CD4-positive, alpha-beta T cell (primary cell): ENCODE measurements at regions of chr12 and their contacts with region 1.

Region 1: GRCh38 chr12:14960548-14961465 is 594 bp downstream of the ARHGDIB start:
- DNase-seq: peak in 12 of 14 experiments; percentile 45 to 79 (median 55)
- ATAC-seq: peak; percentile 40
- H3K4me3 ChIP-seq: peak overlapping the region; percentile 80
- H3K4me3 Mint-ChIP-seq: peak overlapping the region; percentile 97
- H3K27ac ChIP-seq: peak overlapping the region; percentile 89 to 90
- H3K27ac Mint-ChIP-seq: peak overlapping the region; percentile 94
- H3K4me1 ChIP-seq: peaks cover 41% of the 10 kb centered on the region
- H3K4me1 Mint-ChIP-seq: peaks cover 73% of the 10 kb centered on the region
- H3K27me3 ChIP-seq: no peaks in the 10 kb centered on the region
- H3K27me3 Mint-ChIP-seq: no peaks in the 10 kb centered on the region
- CTCF ChIP-seq: no peak

Region 2: GRCh38 chr12:14774906-14775762 is 185.7 kb before region 1 on chr12:
- CTCF ChIA-PET with region 1: interaction called, 4 read pairs
- POLR2A ChIA-PET with region 1: interaction called, 144 read pairs
- intact Hi-C with region 1: loop called (anchors 2 to 5 kb)
- DNase-seq: peak in 11 of 14 experiments; percentile 2 to 56 (median 14)
- ATAC-seq: no peak
- H3K4me3 ChIP-seq: peak overlapping the region; percentile 83
- H3K4me3 Mint-ChIP-seq: peak overlapping the region; percentile 97
- H3K27ac ChIP-seq: peak overlapping the region; percentile 61 to 79
- H3K27ac Mint-ChIP-seq: peak overlapping the region; percentile 100
- H3K4me1 ChIP-seq: peaks cover 28% of the 10 kb centered on the region
- H3K4me1 Mint-ChIP-seq: peaks cover 63% of the 10 kb centered on the region
- H3K27me3 ChIP-seq: no peaks in the 10 kb centered on the region
- H3K27me3 Mint-ChIP-seq: no peaks in the 10 kb centered on the region
- CTCF ChIP-seq: no peak

Region 3: GRCh38 chr12:14937689-14938088 is 23.1 kb before region 1 on chr12:
- CTCF ChIA-PET with region 1: interaction called, 3 read pairs
- POLR2A ChIA-PET with region 1: interaction called, 71 read pairs
- intact Hi-C with region 1: loop called in 1 of 2 experiments (anchors 2 kb)
- DNase-seq: peak in 5 of 14 experiments; percentile 33 to 68 (median 55)
- ATAC-seq: peak; percentile 35
- H3K4me3 ChIP-seq: no peak overlapping the region
- H3K4me3 Mint-ChIP-seq: no peak overlapping the region
- H3K27ac ChIP-seq: no peak overlapping the region
- H3K27ac Mint-ChIP-seq: peak overlapping the region; percentile 72
- H3K4me1 ChIP-seq: peaks cover 17% of the 10 kb centered on the region
- H3K4me1 Mint-ChIP-seq: peaks cover 63% of the 10 kb centered on the region
- H3K27me3 ChIP-seq: no peaks in the 10 kb centered on the region
- H3K27me3 Mint-ChIP-seq: no peaks in the 10 kb centered on the region
- CTCF ChIP-seq: peak; percentile 59

Region 4: GRCh38 chr12:14948672-14949071 is 12.1 kb before region 1 on chr12:
- CTCF ChIA-PET with region 1: interaction called, 3 read pairs
- POLR2A ChIA-PET with region 1: interaction called, 104 read pairs
- intact Hi-C with region 1: loop called in 1 of 2 experiments (anchors 1 kb)
- DNase-seq: peak in 9 of 14 experiments; percentile 29 to 92 (median 57)
- ATAC-seq: peak; percentile 85
- H3K4me3 ChIP-seq: peak overlapping the region; percentile 34
- H3K4me3 Mint-ChIP-seq: peak overlapping the region; percentile 81
- H3K27ac ChIP-seq: peak overlapping the region; percentile 90 to 95
- H3K27ac Mint-ChIP-seq: peak overlapping the region; percentile 94
- H3K4me1 ChIP-seq: peaks cover 66% of the 10 kb centered on the region
- H3K4me1 Mint-ChIP-seq: peaks cover 92% of the 10 kb centered on the region
- H3K27me3 ChIP-seq: no peaks in the 10 kb centered on the region
- H3K27me3 Mint-ChIP-seq: no peaks in the 10 kb centered on the region
- CTCF ChIP-seq: no peak

Region 5: GRCh38 chr12:15013634-15014179 is 52.9 kb after region 1 on chr12:
- CTCF ChIA-PET with region 1: no interaction called
- POLR2A ChIA-PET with region 1: no interaction called
- intact Hi-C with region 1: no loop called
- DNase-seq: no peak
- ATAC-seq: no peak
- H3K4me3 ChIP-seq: no peak overlapping the region
- H3K4me3 Mint-ChIP-seq: no peak overlapping the region
- H3K27ac ChIP-seq: no peak overlapping the region
- H3K27ac Mint-ChIP-seq: no peak overlapping the region
- H3K4me1 ChIP-seq: peaks cover 3% of the 10 kb centered on the region
- H3K4me1 Mint-ChIP-seq: no peaks in the 10 kb centered on the region
- H3K27me3 ChIP-seq: no peaks in the 10 kb centered on the region
- H3K27me3 Mint-ChIP-seq: peaks cover 6% of the 10 kb centered on the region
- CTCF ChIP-seq: no peak

Region 6: GRCh38 chr12:15074351-15074750 is 113.5 kb after region 1 on chr12:
- CTCF ChIA-PET with region 1: no interaction called
- POLR2A ChIA-PET with region 1: no interaction called
- intact Hi-C with region 1: no loop called
- DNase-seq: no peak
- ATAC-seq: no peak
- H3K4me3 ChIP-seq: no peak overlapping the region
- H3K4me3 Mint-ChIP-seq: no peak overlapping the region
- H3K27ac ChIP-seq: no peak overlapping the region
- H3K27ac Mint-ChIP-seq: no peak overlapping the region
- H3K4me1 ChIP-seq: no peaks in the 10 kb centered on the region
- H3K4me1 Mint-ChIP-seq: peaks cover 15% of the 10 kb centered on the region
- H3K27me3 ChIP-seq: no peaks in the 10 kb centered on the region
- H3K27me3 Mint-ChIP-seq: peaks cover 17% of the 10 kb centered on the region
- CTCF ChIP-seq: no peak

Region 7: GRCh38 chr12:15546102-15546701 is 585.4 kb after region 1 on chr12:
- CTCF ChIA-PET with region 1: no interaction called
- POLR2A ChIA-PET with region 1: interaction called, 11 read pairs
- intact Hi-C with region 1: no loop called
- DNase-seq: peak in 10 of 14 experiments; percentile 21 to 81 (median 45)
- ATAC-seq: peak; percentile 93
- H3K4me3 ChIP-seq: peak overlapping the region; percentile 19
- H3K4me3 Mint-ChIP-seq: peak overlapping the region; percentile 83
- H3K27ac ChIP-seq: peak overlapping the region; percentile 59 to 67
- H3K27ac Mint-ChIP-seq: peak overlapping the region; percentile 100
- H3K4me1 ChIP-seq: peaks cover 22% of the 10 kb centered on the region
- H3K4me1 Mint-ChIP-seq: peaks cover 85% of the 10 kb centered on the region
- H3K27me3 ChIP-seq: no peaks in the 10 kb centered on the region
- H3K27me3 Mint-ChIP-seq: no peaks in the 10 kb centered on the region
- CTCF ChIP-seq: no peak